Panc1 (cell line): ENCODE measurements at regions of chr1 and their contacts with region 1.

Region 1: DNA sequence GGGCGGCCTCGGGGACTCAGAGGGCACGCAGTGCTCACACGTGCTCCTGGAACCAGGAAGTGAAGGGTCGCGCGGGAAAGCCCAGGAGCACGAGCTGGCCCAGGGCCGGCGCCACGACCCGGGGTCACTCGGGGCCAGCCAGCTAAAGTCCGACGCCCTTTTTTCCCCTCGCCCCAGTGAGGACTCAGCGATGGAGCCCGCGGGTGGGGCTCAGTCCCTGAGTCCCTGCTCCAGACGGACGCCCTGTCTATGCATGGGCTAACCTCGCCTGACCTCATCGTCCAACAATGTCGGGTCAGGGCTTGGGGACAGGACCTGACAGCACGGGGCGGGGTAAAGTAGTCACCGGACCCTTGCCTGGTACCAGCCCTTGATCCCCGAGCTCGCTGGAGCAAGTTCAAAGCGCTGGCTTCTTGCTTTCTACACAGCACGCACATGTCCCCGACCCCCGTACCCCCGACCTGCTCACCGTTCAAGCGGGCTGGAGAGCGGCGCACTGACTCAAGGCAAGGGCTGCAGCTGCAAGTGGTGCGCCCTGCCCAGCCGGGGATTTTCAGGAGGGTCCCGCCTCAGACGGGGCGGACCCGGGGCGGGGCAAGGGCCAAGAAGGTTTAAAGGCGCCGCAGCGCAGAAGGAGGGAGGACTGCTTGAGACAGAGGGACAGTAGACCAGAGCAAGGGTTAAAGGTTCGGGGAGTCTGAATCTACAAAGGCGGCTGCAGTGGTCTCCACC is at the start of gene TAGLN2:
- DNase-seq: peak; percentile 67
- ATAC-seq: peak; percentile 91
- H3K4me3 ChIP-seq: peak within 1 kb of the TSS; percentile 81 to 96
- H3K27ac ChIP-seq: peak within 1 kb of the TSS; percentile 87
- H3K4me1 ChIP-seq: peaks cover 38% of the 10 kb centered on the region
- H3K27me3 ChIP-seq: no peaks in the 10 kb centered on the region
- CTCF ChIP-seq: no peak
- total RNA-seq, gene TAGLN2: 474 TPM

Region 2: DNA sequence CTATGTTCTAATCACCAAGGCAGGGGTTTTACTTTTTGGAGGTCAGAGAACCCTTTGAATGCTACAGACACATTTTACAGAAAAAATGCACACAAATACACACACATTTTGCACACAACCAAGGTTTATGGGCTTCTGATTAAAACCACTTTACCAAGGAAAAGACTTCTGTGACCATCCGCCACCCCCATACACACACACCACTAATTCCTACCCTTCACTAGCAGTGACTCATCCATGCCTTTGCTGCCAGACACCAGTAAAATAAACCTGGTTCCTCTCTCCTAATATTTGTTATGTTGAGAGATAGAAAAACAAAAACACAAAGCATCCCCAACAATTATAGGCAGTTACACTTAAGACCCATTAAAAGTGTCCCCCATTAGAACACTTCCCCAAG is 93.8 kb after region 1 on chr1:
- CTCF ChIA-PET with region 1: no interaction called
- POLR2A ChIA-PET with region 1: no interaction called
- in situ Hi-C with region 1: no loop called
- intact Hi-C with region 1: no loop called
- DNase-seq: no peak
- ATAC-seq: no peak
- H3K4me3 ChIP-seq: no peak overlapping the region
- H3K27ac ChIP-seq: no peak overlapping the region
- H3K4me1 ChIP-seq: no peaks in the 10 kb centered on the region
- H3K27me3 ChIP-seq: peaks cover 8% of the 10 kb centered on the region; the same call in 1 of the 2 replicates
- CTCF ChIP-seq: no peak

Region 3: GRCh38 chr1:160031365-160032164 is 106.4 kb after region 1 on chr1 and contains the start of gene PIGM:
- CTCF ChIA-PET with region 1: interaction called, 4 read pairs
- POLR2A ChIA-PET with region 1: interaction called, 12 read pairs
- in situ Hi-C with region 1: no loop called
- intact Hi-C with region 1: no loop called
- DNase-seq: peak; percentile 33
- ATAC-seq: peak; percentile 99
- H3K4me3 ChIP-seq: peak within 1 kb of the TSS; percentile 80 to 88
- H3K27ac ChIP-seq: peak within 1 kb of the TSS; percentile 83
- H3K4me1 ChIP-seq: peaks cover 6% of the 10 kb centered on the region
- H3K27me3 ChIP-seq: peaks cover 22% of the 10 kb centered on the region
- CTCF ChIP-seq: no peak
- total RNA-seq, gene PIGM: 4.4 TPM

Region 4: GRCh38 chr1:160046494-160047110 is 121.5 kb after region 1 on chr1:
- CTCF ChIA-PET with region 1: no interaction called
- POLR2A ChIA-PET with region 1: no interaction called
- in situ Hi-C with region 1: no loop called
- intact Hi-C with region 1: no loop called
- DNase-seq: no peak
- ATAC-seq: peak; percentile 85
- H3K4me3 ChIP-seq: no peak overlapping the region
- H3K27ac ChIP-seq: no peak overlapping the region
- H3K4me1 ChIP-seq: no peaks in the 10 kb centered on the region
- H3K27me3 ChIP-seq: peaks cover 11% of the 10 kb centered on the region
- CTCF ChIP-seq: peak; percentile 80

Region 5: DNA sequence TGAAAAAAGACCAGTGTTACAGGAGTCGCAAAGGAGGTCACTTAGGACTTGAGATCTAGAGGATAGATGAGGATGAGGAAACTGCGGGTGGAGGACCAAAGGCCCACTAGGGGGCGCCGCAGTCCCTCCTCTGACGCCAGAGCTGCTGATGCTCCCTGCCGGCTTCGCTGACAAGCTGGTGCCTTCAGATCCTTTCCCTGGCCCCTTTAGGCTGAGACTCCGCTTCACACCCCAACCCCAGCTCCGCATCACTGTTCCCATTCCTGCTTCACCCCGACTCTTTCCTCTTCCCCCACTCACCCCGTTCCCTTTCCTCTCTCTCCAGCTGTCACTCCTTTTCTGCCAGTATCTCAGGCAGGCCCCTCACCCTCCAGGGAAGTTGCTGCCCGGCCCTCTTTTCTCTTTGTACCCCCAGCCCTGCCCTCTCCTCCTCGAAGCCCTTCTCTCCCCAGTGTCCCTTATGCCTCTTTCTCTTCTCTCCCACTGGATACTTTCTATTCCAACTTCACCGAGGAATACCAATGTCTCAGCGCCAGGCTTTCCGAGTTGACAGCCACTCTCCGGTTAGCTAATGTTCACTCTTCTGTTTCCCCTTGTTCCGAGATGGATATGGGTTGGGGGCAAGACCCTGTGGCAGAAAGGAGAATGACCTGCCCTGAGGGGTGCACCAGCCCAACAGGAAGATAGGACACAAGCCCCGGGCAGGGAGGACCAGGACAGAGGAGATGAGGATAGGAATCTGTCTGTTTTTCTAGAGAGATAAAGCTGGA is 160.7 kb after region 1 on chr1:
- CTCF ChIA-PET with region 1: interaction called, 11 read pairs
- POLR2A ChIA-PET with region 1: no interaction called
- in situ Hi-C with region 1: no loop called
- intact Hi-C with region 1: no loop called
- DNase-seq: no peak
- ATAC-seq: peak; percentile 82
- H3K4me3 ChIP-seq: no peak overlapping the region
- H3K27ac ChIP-seq: no peak overlapping the region
- H3K4me1 ChIP-seq: no peaks in the 10 kb centered on the region
- H3K27me3 ChIP-seq: peaks cover 20% of the 10 kb centered on the region
- CTCF ChIP-seq: peak; percentile 91

Region 6: GRCh38 chr1:160437432-160438316 is 512.5 kb after region 1 on chr1:
- CTCF ChIA-PET with region 1: no interaction called
- POLR2A ChIA-PET with region 1: no interaction called
- in situ Hi-C with region 1: no loop called
- intact Hi-C with region 1: no loop called
- DNase-seq: no peak
- ATAC-seq: peak; percentile 66; the same call in 1 of the 2 replicates
- H3K4me3 ChIP-seq: peak overlapping the region; percentile 7 to 38; a peak in 3 of 4 replicates
- H3K27ac ChIP-seq: peak overlapping the region; percentile 44; the same call in 1 of the 2 replicates
- H3K4me1 ChIP-seq: 0 out of 2 replicates have a peak, but pooled peaks cover 12% of the 10 kb centered on the region
- H3K27me3 ChIP-seq: no peaks in the 10 kb centered on the region
- CTCF ChIP-seq: no peak